ENCODE measurements at regions of chr2 and their contacts with region 1.

Region 1: DNA sequence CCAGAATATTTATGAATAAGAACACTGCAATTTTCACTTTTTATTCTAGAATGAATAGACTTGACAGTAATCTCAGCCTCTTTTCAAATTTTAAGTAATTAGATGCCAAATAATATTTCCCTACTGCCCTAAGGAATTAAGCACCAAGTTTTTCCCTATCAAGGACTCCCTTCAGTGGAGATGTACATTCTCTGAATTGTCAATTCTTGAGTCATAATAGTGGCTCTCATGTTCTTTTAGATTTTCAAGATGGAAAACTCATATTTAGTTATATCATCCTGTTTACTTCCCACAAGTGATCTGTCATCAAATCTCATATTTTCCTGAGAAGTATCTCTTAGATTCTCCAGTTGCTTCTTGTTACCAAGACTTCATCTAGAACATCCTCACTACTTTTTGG is 1248.9 kb upstream of the CHAC2 start:
- DNase-seq: no peak
- H3K4me3 ChIP-seq: no peak overlapping the region
- H3K27ac ChIP-seq: no peak overlapping the region
- H3K4me1 ChIP-seq: no peaks in the 10 kb centered on the region
- H3K27me3 ChIP-seq: no peaks in the 10 kb centered on the region
- CTCF ChIP-seq: no peak
- POLR2A ChIP-seq: no peak

Region 2: DNA sequence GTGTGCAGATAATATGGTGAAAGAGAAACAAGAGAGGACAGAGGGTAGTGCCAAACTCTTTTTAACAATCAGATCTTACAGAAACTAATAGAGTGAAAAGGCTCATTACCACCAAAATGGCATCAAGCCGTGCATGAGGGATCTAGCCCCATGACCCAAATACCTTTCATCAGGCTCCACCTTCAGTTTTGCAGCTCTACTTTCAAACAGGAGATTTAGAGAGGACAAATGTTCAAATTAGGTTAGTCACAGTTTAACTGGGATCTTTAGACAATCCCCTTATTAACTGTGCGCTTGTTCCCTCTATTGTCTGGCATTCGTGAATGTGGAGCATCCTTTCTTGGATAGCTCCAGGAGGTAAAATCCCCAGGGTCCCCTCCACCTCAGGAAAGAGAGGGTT is 39.6 kb after region 1 on chr2:
- intact Hi-C with region 1: loop called (anchors 2 kb)
- DNase-seq: no peak
- H3K4me3 ChIP-seq: no peak overlapping the region
- H3K27ac ChIP-seq: no peak overlapping the region
- H3K4me1 ChIP-seq: no peaks in the 10 kb centered on the region
- H3K27me3 ChIP-seq: no peaks in the 10 kb centered on the region
- CTCF ChIP-seq: no peak
- POLR2A ChIP-seq: no peak